ENCODE measurements at regions of chr1 and their contacts with region 1.

Region 1: DNA sequence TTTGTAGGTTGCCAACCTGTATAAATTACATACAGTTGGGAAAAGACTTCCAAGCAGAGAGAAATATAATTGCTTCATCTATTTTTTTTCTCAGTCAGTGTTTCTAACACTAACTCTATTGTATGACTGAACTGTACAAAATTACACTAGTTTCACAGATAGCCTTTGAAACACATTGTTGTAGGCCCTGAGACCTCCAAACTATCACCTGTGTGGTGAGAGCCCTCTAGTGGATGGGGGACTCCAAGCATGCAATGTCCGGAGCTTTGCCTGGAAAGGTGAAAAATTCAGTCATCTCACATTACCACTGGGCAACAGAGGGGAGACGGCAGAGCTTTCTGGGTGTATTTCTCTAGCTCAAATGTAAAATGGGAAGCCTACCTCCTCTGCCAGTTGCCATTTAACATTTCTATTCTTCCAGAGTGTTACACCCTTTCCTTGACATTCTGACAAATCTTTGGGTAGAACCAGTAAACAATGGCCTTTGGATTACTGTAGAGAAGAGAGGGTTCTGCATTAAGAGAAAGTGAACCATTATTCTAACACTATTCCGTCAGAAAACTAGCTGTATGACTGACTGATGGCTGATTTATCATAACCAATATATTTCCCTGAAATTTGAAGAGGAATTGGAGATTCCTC is 212.2 kb downstream of the LYPLAL1 start:
- DNase-seq: peak; percentile 23
- H3K4me3 ChIP-seq: no peak overlapping the region
- H3K27ac ChIP-seq: no peak overlapping the region
- H3K4me1 ChIP-seq: peaks cover 0 to 9% of the 10 kb centered on the region in 2 experiments; a peak in 2 of 4 replicates
- H3K27me3 ChIP-seq: no peaks in the 10 kb centered on the region
- CTCF ChIP-seq: peak; percentile 69
- EP300 ChIP-seq: peak in 1 of 2 experiments; percentile 12; a peak in 1 of 4 replicates
- RAD21 ChIP-seq: peak; percentile 78

Region 2: DNA sequence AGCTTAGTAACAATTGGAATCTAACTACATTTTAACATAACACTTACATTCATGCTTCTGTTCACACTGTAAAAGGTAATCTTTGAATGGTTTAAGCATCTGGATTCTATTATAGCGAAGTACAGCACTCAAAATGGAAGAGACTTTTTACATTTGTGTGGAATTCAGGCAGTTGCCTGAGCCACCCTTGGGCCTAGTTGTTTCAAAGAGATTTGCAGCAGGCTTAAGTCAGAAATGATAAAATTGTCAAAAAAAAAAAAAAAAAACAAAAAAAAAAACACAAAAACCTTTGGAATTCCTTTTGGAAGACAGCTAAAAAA is 12.3 kb before region 1 on chr1:
- CTCF ChIA-PET with region 1: interaction called, 15 read pairs
- POLR2A ChIA-PET with region 1: no interaction called
- DNase-seq: peak; percentile 33
- H3K4me3 ChIP-seq: no peak overlapping the region
- H3K27ac ChIP-seq: peak overlapping the region in 1 of 2 experiments; percentile 77; a peak in 1 of 4 replicates
- H3K4me1 ChIP-seq: peaks cover 0 to 14% of the 10 kb centered on the region in 2 experiments; a peak in 3 of 4 replicates
- H3K27me3 ChIP-seq: no peaks in the 10 kb centered on the region
- CTCF ChIP-seq: no peak
- EP300 ChIP-seq: no peak
- RAD21 ChIP-seq: no peak